ENCODE measurements at regions of chr17 and their contacts with region 1.

Region 1: DNA sequence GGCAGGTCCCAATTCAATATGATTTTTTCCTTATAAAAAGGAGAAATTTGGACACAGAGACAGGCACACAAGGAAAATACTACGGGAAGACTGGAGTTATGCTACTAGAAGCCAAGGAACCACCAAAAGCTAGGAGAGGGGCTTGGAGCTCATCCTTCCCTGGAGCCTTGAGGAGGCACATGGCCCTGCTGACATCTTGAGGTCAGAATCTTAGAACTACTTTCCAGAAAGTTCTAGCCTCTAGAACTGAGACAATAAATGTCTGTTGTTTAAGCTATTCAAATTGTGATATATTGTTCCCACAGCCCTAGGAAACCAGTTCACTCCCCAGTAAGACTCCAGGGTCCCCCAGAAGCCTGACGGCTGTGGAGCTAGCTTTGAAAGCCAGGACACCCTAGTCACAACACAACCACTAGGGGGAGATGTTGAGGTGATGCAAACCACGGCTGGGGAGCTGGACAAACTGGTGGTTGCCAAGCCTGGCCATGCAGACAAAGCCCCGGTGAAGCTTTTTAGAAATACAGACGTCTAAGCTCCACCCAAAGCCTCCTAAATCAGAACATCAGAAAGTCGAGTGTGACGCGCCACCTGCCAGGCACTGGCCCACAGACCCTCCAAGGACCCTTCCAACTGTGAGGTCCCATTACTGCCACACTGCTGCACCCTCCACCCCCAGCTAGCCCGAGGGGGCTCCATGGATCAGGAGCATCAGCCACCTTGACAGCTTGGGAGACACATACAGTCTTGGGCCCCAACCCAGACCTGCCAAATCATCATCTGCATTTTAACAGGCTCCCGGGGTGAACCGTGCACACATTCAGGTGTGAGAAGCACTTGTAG is 106.4 kb downstream of the SLC39A11 start:
- DNase-seq: peak; percentile 66 to 79 (median 69)
- ATAC-seq: peak; percentile 80 to 88
- H3K4me3 ChIP-seq: no peak overlapping the region
- H3K27ac ChIP-seq: no peak overlapping the region
- H3K4me1 ChIP-seq: no peaks in the 10 kb centered on the region
- H3K27me3 ChIP-seq: no peaks in the 10 kb centered on the region

Region 2: GRCh38 chr17:73092523-73093135 is 106.5 kb after region 1 on chr17 and contains the start of gene SLC39A11:
- intact Hi-C with region 1: loop called in 1 of 4 experiments (anchors 10 kb)
- DNase-seq: peak; percentile 94 to 98 (median 97)
- ATAC-seq: peak; percentile 98 to 99
- H3K4me3 ChIP-seq: peak within 1 kb of the TSS; percentile 82
- H3K27ac ChIP-seq: peak within 1 kb of the TSS; percentile 75
- H3K4me1 ChIP-seq: peaks cover 3% of the 10 kb centered on the region
- H3K27me3 ChIP-seq: no peaks in the 10 kb centered on the region
- total RNA-seq, gene SLC39A11: 9.8 to 12.6 (median 9.9) TPM

Region 3: GRCh38 chr17:73156166-73156840 is 170.2 kb after region 1 on chr17:
- intact Hi-C with region 1: loop called (anchors 5 to 10 kb)
- DNase-seq: peak; percentile 72 to 91 (median 86)
- ATAC-seq: peak; percentile 90 to 93
- H3K4me3 ChIP-seq: no peak overlapping the region
- H3K27ac ChIP-seq: no peak overlapping the region
- H3K4me1 ChIP-seq: no peaks in the 10 kb centered on the region
- H3K27me3 ChIP-seq: no peaks in the 10 kb centered on the region

Region 4: GRCh38 chr17:73166731-73167581 is 180.9 kb after region 1 on chr17:
- intact Hi-C with region 1: loop called in 1 of 4 experiments (anchors 10 kb)
- DNase-seq: no peak
- ATAC-seq: no peak
- H3K4me3 ChIP-seq: peak overlapping the region; percentile 26
- H3K27ac ChIP-seq: no peak overlapping the region
- H3K4me1 ChIP-seq: peaks cover 3% of the 10 kb centered on the region
- H3K27me3 ChIP-seq: no peaks in the 10 kb centered on the region